ENCODE measurements at regions of chr13 and their contacts with region 1.

Region 1: DNA sequence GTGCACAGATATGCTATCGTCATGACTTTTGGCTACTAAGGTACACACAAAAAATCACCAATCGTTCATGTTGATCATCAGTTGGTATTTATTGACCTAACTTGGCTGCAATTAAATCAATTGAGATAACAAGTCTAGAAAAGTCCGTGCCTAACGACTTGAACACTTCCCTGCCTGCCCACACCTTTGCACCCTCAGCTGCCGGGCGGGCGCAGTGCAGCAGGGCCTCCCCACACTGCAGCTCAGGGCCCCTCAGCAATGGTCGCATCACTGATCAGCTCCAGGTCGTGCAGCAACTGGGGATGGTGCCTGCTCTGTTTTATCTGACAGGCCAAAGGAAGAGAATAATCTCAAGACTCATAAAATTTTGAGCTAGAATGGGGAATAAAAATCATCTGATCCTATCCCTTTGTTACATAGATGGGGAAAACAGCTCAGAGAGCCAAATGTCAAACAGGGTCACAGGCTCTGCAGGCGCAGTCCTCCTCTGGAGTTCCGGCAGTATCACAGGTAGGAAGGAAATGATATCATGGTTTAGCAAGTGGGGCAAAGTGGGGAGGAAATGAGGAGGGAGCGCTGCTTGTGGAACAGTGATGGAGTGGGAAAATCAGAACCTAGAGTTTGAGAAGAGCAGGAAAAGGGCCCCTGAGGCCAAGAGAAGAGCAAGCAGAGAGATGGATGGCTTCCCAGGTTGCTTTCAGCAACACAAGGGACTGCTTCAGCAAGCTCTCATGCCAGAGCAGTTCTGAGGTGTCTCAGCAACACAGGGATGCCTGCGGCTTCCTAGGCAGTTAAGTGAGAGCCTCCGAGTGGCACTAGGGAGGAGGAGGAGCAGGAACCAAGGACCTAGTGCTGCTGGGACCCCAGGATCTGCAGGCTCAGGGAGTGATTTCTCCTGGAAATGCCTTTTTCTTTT is 57.5 kb downstream of the SLC7A1 start:
- DNase-seq: no peak
- H3K4me3 ChIP-seq: no peak overlapping the region
- H3K27ac ChIP-seq: peak overlapping the region in 3 of 4 donors; percentile 23 to 53 (median 34)
- H3K4me1 ChIP-seq: peaks cover 12 to 77% (median 29%) of the 10 kb centered on the region in 3 donors
- H3K27me3 ChIP-seq: no peaks in the 10 kb centered on the region
- CTCF ChIP-seq: no peak
- POLR2A ChIP-seq: no peak

Region 2: GRCh38 chr13:29589234-29589633 is 51.2 kb after region 1 on chr13:
- intact Hi-C with region 1: loop called (anchors 5 kb)
- DNase-seq: no peak
- H3K4me3 ChIP-seq: peak overlapping the region in 3 of 4 donors; percentile 63 to 88 (median 75)
- H3K27ac ChIP-seq: peak overlapping the region; percentile 82 to 100 (median 96)
- H3K4me1 ChIP-seq: peaks cover 16 to 98% (median 25%) of the 10 kb centered on the region in 3 donors
- H3K27me3 ChIP-seq: no peaks in the 10 kb centered on the region
- CTCF ChIP-seq: no peak
- POLR2A ChIP-seq: no peak